Endothelial cell of umbilical vein (primary cell): ENCODE measurements at regions of chr20 and their contacts with region 1.

Region 1: DNA sequence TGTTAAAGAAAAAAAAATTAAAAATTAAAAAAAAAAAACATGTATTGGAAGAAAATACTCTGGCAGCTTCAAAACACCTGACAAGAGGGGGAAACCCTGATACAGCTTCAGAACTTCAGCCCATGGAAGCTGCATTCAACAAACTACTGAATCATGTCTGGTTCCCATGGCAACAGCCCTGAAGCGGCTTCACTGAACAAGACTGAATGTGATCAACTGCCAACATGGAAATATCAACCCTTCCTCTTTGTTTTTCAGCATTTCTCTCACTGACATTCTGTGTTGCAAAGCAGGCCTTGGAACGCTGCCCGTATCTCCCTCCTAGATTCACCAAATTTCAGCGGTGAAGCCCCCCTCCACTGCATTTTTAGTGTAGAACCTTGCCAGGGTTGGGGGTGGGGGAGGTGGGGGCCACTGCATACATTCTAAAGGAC is 91.3 kb upstream of the SHLD1 start:
- DNase-seq: peak; percentile 91
- H3K4me3 ChIP-seq: no peak overlapping the region
- H3K27ac ChIP-seq: no peak overlapping the region
- H3K4me1 ChIP-seq: peaks cover 26% of the 10 kb centered on the region
- H3K27me3 ChIP-seq: no peaks in the 10 kb centered on the region
- CTCF ChIP-seq: no peak
- POLR2A ChIP-seq: no peak

Region 2: DNA sequence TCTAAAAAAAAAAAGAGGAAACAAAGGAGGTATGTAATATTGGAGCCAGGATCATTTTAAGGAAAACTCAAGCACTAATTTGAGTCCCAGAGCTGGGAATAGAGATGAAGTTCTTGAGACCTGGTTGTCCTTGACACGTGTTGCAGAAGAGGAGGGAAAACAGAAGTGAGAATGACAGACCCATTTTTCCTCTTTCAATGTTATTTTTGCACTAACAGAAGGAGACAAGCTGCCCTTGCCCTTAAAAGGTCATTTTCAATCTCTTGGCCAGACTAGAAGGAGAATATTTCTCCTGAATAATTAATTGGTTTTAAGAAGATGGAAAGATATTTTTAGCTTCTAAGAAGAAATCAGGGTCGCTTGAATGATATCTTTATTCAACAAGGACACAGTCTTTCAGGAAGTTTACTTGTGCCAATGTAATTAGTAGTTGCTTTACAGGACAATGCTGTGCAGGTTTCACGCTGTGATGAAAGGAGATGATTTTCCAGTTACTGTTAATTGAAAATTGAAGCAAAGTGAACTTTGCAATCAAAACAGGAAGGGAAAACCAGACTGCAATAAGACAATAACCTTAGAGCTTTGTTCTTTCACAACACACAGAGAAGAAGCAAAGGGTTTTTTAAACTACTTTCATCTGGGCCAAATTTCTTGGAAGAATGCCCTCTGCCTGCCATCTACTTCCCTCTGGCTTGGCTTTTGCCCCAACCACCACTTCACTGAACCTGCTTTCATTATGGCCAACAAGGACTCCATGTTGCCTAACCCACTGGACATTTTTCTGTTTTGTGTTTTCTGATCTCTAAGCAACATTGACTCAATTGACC is 16.6 kb before region 1 on chr20:
- CTCF ChIA-PET with region 1: interaction called, 7 read pairs
- POLR2A ChIA-PET with region 1: no interaction called
- dilution Hi-C with region 1: no loop called
- intact Hi-C with region 1: loop called (anchors 1 kb)
- DNase-seq: peak; percentile 80
- H3K4me3 ChIP-seq: no peak overlapping the region
- H3K27ac ChIP-seq: peak overlapping the region; percentile 66
- H3K4me1 ChIP-seq: peaks cover 31% of the 10 kb centered on the region
- H3K27me3 ChIP-seq: no peaks in the 10 kb centered on the region
- CTCF ChIP-seq: no peak
- POLR2A ChIP-seq: no peak

Region 3: DNA sequence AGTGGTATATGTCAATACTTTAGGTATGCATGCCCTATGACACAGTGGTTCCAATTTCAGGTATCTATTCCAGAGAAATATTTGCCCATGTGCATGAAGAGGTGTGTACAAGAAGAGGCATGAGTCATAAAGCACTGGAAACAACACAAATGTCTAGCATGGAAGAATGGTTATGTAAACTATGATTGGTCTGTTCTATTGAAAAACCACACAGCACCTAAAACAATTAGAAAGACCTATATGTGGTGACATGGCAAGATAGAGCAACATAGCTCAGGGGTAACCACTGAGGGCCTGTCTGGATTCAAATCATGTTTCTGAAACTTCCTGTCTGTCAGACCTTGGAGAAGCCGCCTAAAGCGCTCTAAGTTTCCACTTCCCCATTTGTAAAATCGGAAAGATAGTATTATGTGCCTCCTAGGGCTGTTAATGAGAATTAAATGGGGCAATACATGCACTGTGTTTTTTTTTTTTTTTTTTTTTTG is 15.3 kb after region 1 on chr20:
- CTCF ChIA-PET with region 1: no interaction called
- POLR2A ChIA-PET with region 1: no interaction called
- dilution Hi-C with region 1: no loop called
- intact Hi-C with region 1: no loop called
- DNase-seq: no peak
- H3K4me3 ChIP-seq: no peak overlapping the region
- H3K27ac ChIP-seq: no peak overlapping the region
- H3K4me1 ChIP-seq: no peaks in the 10 kb centered on the region
- H3K27me3 ChIP-seq: peaks cover 1 to 4% of the 10 kb centered on the region in 2 experiments
- CTCF ChIP-seq: no peak
- POLR2A ChIP-seq: no peak

Region 4: DNA sequence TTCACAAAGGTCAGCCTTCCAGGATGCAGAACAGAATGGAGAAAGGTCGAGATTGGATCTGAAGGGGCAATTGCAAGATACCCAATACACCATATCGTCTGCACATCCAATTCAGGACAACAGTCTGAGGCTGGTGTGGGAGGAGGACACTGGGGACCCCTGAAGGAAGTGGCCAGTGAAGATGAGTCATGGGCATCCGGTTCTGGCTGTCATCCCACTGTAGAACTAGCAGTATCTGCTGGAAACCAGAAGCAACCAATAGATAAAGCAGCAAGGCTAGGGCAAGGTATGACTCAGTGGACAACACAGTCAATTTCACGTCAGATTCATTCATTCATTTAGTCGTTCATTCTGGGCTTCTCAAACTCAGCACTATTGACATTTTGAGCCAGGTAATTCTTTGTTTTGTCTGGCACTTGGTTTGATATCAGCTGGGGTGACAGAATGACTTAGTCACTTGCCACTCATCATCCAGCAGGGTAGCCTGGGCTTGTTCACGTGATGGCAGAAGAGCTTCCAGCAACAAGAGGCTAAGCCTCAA is 61.0 kb after region 1 on chr20:
- CTCF ChIA-PET with region 1: no interaction called
- POLR2A ChIA-PET with region 1: no interaction called
- dilution Hi-C with region 1: no loop called
- intact Hi-C with region 1: loop called (anchors 1 kb)
- DNase-seq: no peak
- H3K4me3 ChIP-seq: no peak overlapping the region
- H3K27ac ChIP-seq: no peak overlapping the region
- H3K4me1 ChIP-seq: peaks cover 13% of the 10 kb centered on the region
- H3K27me3 ChIP-seq: peaks cover 5 to 18% of the 10 kb centered on the region in 2 experiments
- CTCF ChIP-seq: no peak
- POLR2A ChIP-seq: no peak